ENCODE measurements at regions of chr16 and their contacts with region 1.

Region 1: GRCh38 chr16:149024-149662 is 3.3 kb upstream of the HBZ start:
- DNase-seq: no peak
- ATAC-seq: no peak
- H3K4me3 ChIP-seq: no peak overlapping the region
- H3K27ac ChIP-seq: no peak overlapping the region
- H3K4me1 ChIP-seq: no peaks in the 10 kb centered on the region
- H3K27me3 ChIP-seq: no peaks in the 10 kb centered on the region
- CTCF ChIP-seq: no peak

Region 2: GRCh38 chr16:293043-293775 is 144.1 kb after region 1 on chr16:
- CTCF ChIA-PET with region 1: no interaction called
- POLR2A ChIA-PET with region 1: interaction called, 13 read pairs
- in situ Hi-C with region 1: no loop called
- intact Hi-C with region 1: no loop called
- DNase-seq: no peak
- ATAC-seq: no peak
- H3K4me3 ChIP-seq: no peak overlapping the region
- H3K27ac ChIP-seq: no peak overlapping the region
- H3K4me1 ChIP-seq: no peaks in the 10 kb centered on the region
- H3K27me3 ChIP-seq: no peaks in the 10 kb centered on the region
- CTCF ChIP-seq: no peak